ENCODE measurements at regions of chr12 and their contacts with region 1.

Region 1: GRCh38 chr12:53746592-53747092 is 5.1 kb downstream of the CISTR start:
- DNase-seq: peak; percentile 92
- ATAC-seq: peak; percentile 78
- H3K4me3 Mint-ChIP-seq: no peak overlapping the region
- H3K27ac Mint-ChIP-seq: no peak overlapping the region
- H3K4me1 Mint-ChIP-seq: peaks cover 3% of the 10 kb centered on the region
- H3K27me3 Mint-ChIP-seq: peaks cover 30% of the 10 kb centered on the region

Region 2: GRCh38 chr12:53543539-53543938 is 203.1 kb before region 1 on chr12:
- CTCF ChIA-PET with region 1: interaction called, 41 read pairs
- POLR2A ChIA-PET with region 1: no interaction called
- DNase-seq: peak; percentile 65
- ATAC-seq: peak; percentile 92
- H3K4me3 Mint-ChIP-seq: no peak overlapping the region
- H3K27ac Mint-ChIP-seq: peak overlapping the region; percentile 59
- H3K4me1 Mint-ChIP-seq: peaks cover 10% of the 10 kb centered on the region
- H3K27me3 Mint-ChIP-seq: no peaks in the 10 kb centered on the region

Region 3: DNA sequence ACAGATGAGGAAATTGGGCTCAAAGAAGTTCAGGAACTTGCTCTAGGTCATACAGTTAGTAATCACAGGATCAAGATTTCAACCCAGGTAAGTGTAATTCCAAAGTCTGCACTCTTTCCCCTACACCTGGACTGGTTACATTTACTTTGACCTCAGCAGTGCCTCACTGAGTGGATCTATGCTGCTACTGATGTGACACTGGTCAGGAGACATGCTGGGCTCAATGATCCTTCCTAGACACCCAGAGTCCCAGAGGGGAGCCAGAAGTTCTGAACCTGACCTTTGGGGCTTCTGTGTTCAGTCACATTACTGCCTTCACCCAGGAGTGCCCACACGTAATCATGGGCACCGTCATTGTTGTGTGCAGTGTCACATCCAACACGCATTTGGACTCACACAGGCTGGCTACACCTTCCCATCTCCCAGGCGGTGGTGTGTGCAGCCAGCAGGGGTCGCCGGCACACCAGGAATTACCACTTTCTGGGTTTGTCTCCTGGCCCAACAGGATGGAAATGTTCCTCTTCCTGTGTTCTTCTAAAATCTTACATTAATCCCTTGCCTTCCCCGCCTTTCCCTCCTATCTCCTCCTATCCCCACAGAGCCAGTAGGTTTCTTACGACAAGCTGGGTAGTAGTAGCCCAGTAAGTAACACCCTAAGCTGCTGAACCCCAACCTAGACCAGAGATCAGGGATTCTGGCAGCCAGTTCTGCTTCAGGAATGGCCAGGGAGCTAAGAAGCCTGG is 45.0 kb before region 1 on chr12:
- CTCF ChIA-PET with region 1: interaction called, 279 read pairs
- POLR2A ChIA-PET with region 1: no interaction called
- DNase-seq: peak; percentile 78
- ATAC-seq: peak; percentile 94
- H3K4me3 Mint-ChIP-seq: no peak overlapping the region
- H3K27ac Mint-ChIP-seq: no peak overlapping the region
- H3K4me1 Mint-ChIP-seq: peaks cover 8% of the 10 kb centered on the region
- H3K27me3 Mint-ChIP-seq: peaks cover 70% of the 10 kb centered on the region

Region 4: DNA sequence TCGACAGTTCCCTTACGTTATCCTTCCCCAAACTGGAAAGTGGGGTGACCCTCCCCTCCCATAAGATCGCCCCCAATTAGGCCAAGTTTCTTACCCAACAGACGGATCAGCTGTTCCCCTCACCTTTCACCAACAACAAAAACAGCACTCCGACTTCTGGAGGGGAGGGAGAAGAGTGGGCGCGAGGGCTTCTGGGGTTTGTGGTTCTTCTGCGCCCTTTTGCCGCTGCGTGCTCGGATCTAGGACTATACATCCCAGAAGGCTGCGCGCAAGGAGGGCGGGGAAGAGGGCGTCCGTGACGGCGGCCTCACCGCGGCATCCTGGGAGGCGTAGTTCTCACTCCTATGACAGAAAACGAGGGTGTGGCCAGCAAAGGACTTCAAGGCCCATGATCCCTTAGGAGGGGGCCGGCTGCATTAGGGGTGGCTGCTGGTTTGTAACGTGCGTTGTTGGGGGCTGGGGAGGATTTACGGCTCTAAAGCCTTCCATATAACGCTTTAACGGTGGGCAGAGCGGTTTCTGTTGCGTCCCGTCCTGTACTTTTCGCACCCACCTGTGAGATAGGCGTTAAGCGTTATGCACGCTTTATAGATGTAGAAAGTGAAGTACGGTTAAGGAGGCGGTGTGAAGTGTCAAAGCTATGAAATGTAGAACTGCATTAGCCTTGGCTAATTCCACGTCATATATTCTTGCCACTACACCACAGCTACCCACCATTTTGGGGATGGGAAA is 19.2 kb before region 1 on chr12 and contains the start of gene CALCOCO1:
- CTCF ChIA-PET with region 1: interaction called, 342 read pairs
- POLR2A ChIA-PET with region 1: interaction called, 3 read pairs
- DNase-seq: peak; percentile 99
- ATAC-seq: peak; percentile 99
- H3K4me3 Mint-ChIP-seq: peak within 1 kb of the TSS; percentile 86
- H3K27ac Mint-ChIP-seq: peak within 1 kb of the TSS; percentile 83
- H3K4me1 Mint-ChIP-seq: peaks cover 26% of the 10 kb centered on the region
- H3K27me3 Mint-ChIP-seq: peaks cover 3% of the 10 kb centered on the region
- total RNA-seq, gene CALCOCO1: 23.8 to 27.9 TPM

Region 5: GRCh38 chr12:53766881-53767280 is 20.2 kb after region 1 on chr12:
- CTCF ChIA-PET with region 1: interaction called, 15 read pairs
- POLR2A ChIA-PET with region 1: no interaction called
- DNase-seq: no peak
- ATAC-seq: no peak
- H3K4me3 Mint-ChIP-seq: no peak overlapping the region
- H3K27ac Mint-ChIP-seq: no peak overlapping the region
- H3K4me1 Mint-ChIP-seq: no peaks in the 10 kb centered on the region
- H3K27me3 Mint-ChIP-seq: peaks cover 64% of the 10 kb centered on the region

Measured in activated CD8-positive, alpha-beta T cell treated with anti-CD3 and anti-CD28 coated beads, Interleukin-2, amount 10 ng/mL, durations not matched to agents 7 days and 5 days (primary cell).